ENCODE measurements at regions of chr1 and their contacts with region 1.

Region 1: GRCh38 chr1:100152271-100152670 is 19.3 kb downstream of the TRMT13 start:
- H3K4me3 Mint-ChIP-seq: no peak overlapping the region
- H3K27ac Mint-ChIP-seq: no peak overlapping the region
- H3K4me1 Mint-ChIP-seq: peaks cover 18% of the 10 kb centered on the region
- H3K27me3 Mint-ChIP-seq: no peaks in the 10 kb centered on the region

Region 2: DNA sequence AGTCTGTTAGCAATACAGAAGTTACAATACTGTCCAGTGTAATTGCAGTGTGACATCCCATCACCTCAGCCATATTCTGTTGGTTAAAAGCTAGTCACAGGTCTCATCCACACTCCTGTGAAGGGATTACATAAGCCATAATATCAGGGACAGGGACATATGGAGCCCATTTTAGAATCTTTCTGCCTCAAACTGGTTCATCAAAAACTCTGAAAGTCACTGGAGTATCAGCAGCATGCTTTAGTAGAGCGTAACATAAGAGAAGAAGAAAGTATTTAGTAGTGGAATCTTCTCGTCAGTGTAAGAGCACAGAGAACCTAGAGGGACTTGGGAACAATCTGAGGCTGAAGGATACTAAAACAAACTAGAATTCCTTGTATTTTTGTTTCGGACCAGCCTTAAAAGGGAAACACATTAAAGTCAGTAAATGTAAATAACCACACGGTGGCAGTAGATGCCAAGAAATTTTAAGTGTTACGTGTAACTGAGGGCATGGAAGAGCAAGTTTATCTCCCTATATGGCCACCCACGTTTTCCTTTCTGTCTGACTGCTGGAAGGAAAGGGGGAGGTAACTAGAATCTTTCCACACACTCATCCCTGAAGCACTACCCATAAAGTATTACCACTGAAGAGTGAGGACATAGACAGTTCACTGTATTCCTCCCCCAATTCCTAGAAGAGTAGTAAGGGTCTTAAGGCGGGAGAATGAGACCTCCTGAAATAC is 343.7 kb before region 1 on chr1:
- intact Hi-C with region 1: loop called (anchors 10 kb)
- H3K4me3 Mint-ChIP-seq: no peak overlapping the region
- H3K27ac Mint-ChIP-seq: no peak overlapping the region
- H3K4me1 Mint-ChIP-seq: no peaks in the 10 kb centered on the region
- H3K27me3 Mint-ChIP-seq: peaks cover 3% of the 10 kb centered on the region

Region 3: GRCh38 chr1:100100202-100100601 is 52.1 kb before region 1 on chr1:
- intact Hi-C with region 1: no loop called
- H3K4me3 Mint-ChIP-seq: no peak overlapping the region
- H3K27ac Mint-ChIP-seq: no peak overlapping the region
- H3K4me1 Mint-ChIP-seq: no peaks in the 10 kb centered on the region
- H3K27me3 Mint-ChIP-seq: no peaks in the 10 kb centered on the region

Region 4: GRCh38 chr1:100188617-100189016 is 36.3 kb after region 1 on chr1:
- intact Hi-C with region 1: loop called (anchors 5 kb)
- H3K4me3 Mint-ChIP-seq: no peak overlapping the region
- H3K27ac Mint-ChIP-seq: no peak overlapping the region
- H3K4me1 Mint-ChIP-seq: no peaks in the 10 kb centered on the region
- H3K27me3 Mint-ChIP-seq: no peaks in the 10 kb centered on the region

Region 5: GRCh38 chr1:100249537-100250257 is 97.4 kb after region 1 on chr1 and contains the start of gene DBT:
- intact Hi-C with region 1: no loop called
- H3K4me3 Mint-ChIP-seq: no peak within 1 kb of the TSS
- H3K27ac Mint-ChIP-seq: no peak within 1 kb of the TSS
- H3K4me1 Mint-ChIP-seq: peaks cover 7% of the 10 kb centered on the region
- H3K27me3 Mint-ChIP-seq: no peaks in the 10 kb centered on the region

Measured in dendritic cell treated with granulocyte-macrophage colony-stimulating factor and Interleukin-4, amounts not matched to agents 40 ng/mL and 50 ng/mL, for 4 days (primary cell).